Left cardiac atrium (tissue), 4 donors: ENCODE measurements at regions of chr5 and their contacts with region 1.

Region 1: GRCh38 chr5:142446131-142446959 is 121.5 kb upstream of the SPRY4 start:
- DNase-seq: no peak
- ATAC-seq: peak; percentile 19 to 71

Region 2: DNA sequence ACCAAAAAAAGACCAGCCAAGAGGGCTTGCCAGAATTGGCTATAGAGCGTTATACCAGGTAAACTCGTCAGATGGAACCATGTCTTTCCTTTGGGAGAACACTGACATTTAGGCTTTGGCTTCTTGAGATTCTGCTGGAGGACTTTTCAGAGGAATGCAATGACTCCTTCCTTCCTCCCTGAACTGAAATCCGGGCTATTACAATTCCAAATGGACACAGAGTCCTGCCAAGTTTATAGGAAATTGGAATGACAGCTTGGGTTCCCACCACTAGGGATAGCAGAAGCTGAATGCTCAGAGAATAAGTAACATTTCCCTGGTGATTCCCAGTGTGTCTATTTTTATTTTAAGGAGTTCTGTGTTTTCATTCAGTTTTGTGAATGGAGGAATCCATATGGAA is 96.6 kb after region 1 on chr5:
- intact Hi-C with region 1: loop called in 1 of 2 experiments (anchors 5 kb)
- DNase-seq: no peak
- ATAC-seq: peak; percentile 58 to 66